ENCODE measurements at regions of chr7 and their contacts with region 1.

Region 1: GRCh38 chr7:143054621-143055020 is 2.5 kb downstream of the OR6V1 start:
- DNase-seq: no peak
- ATAC-seq: no peak
- H3K4me3 ChIP-seq: no peak overlapping the region
- H3K27ac ChIP-seq: no peak overlapping the region
- H3K4me1 ChIP-seq: no peaks in the 10 kb centered on the region
- H3K27me3 ChIP-seq: peaks cover 41% of the 10 kb centered on the region
- CTCF ChIP-seq: no peak

Region 2: DNA sequence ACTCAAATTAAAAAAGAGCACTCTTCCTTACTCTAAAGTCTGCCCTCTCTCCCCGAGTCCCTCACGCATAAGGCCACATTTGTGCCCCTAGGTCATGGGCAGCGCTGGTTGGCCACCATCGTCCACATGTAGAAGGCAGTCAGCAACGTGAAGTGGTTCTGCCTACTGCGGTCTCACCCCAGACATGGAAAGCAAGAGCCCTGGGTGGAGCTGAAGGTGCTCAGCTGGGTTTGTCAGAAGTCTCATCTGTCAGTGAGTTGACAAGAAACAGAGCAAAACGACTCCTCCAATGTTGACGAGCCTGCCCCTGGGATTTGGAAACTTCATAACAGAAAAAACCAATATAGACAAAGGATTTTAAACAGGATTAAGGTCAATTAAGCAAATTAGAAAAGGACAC is 604.4 kb before region 1 on chr7:
- CTCF ChIA-PET with region 1: interaction called, 15 read pairs
- POLR2A ChIA-PET with region 1: no interaction called
- intact Hi-C with region 1: no loop called
- DNase-seq: no peak
- ATAC-seq: no peak
- H3K4me3 ChIP-seq: no peak overlapping the region
- H3K27ac ChIP-seq: no peak overlapping the region
- H3K4me1 ChIP-seq: 0 out of 2 replicates have a peak, but pooled peaks cover under 1% of the 10 kb centered on the region
- H3K27me3 ChIP-seq: no peaks in the 10 kb centered on the region
- CTCF ChIP-seq: no peak

Measured in PC-3 (cell line).